ENCODE measurements at regions of chr3 and their contacts with region 1.

Region 1: DNA sequence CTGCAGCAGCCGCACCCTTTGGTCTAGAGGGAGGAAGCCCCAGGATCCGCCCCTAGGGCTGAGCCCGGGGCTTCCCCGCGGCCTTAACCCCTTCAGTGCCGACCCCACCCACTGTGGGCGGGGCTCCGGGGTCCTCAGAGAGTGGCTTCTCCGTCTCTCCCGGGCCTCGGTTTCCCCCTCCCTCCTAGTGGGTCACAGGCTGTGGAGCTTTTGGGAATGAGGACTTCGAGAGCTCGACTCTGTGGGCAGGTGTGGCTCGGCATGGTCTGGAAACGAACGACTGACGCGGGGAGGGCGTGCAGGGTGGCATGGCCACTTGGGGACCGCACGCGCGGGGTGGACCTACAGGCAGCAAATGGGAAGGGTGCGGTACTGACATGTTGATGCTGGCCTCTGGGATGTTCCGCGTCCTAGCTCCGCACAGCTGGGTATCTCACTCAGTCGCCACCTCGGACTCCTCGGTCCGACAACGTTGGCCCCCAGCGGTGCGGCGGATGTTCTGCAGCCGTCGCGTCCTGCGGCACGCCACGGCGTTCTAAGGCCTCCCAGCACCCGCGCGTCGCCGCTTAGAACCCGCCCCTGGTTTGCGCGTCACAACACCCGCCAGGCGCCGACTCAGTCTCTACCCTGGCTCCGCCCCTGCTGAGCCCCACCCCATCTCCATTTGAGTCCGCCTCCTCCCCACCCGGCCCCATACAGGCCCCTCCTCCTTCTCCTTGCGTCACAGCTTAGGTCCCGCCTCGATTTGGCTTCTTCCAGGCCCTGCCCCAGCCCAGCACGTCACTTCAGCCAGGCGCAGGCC is at the starts of genes HYAL3 and NAA80:
- DNase-seq: peak; percentile 100
- H3K4me3 ChIP-seq: peak within 1 kb of the TSS; percentile 74 to 85
- H3K4me3 Mint-ChIP-seq: peak within 1 kb of the TSS; percentile 95 to 100 (median 97)
- H3K27ac ChIP-seq: peak within 1 kb of the TSS; percentile 90
- H3K27ac Mint-ChIP-seq: peak within 1 kb of the TSS; percentile 95 to 100 (median 100)
- H3K4me1 ChIP-seq: peaks cover 25% of the 10 kb centered on the region
- H3K4me1 Mint-ChIP-seq: peaks cover 12 to 47% (median 26%) of the 10 kb centered on the region in 4 donors
- H3K27me3 ChIP-seq: no peaks in the 10 kb centered on the region
- H3K27me3 Mint-ChIP-seq: no peaks in the 10 kb centered on the region
- total RNA-seq, gene HYAL3: 5.1 to 5.4 TPM
- total RNA-seq, gene NAA80: 33.1 to 33.7 TPM

Region 2: GRCh38 chr3:50235716-50236496 is 63.1 kb before region 1 on chr3 and contains the start of gene GNAI2:
- CTCF ChIA-PET with region 1: interaction called, 5 read pairs
- POLR2A ChIA-PET with region 1: interaction called, 19 read pairs
- intact Hi-C with region 1: loop called (anchors 1 kb)
- DNase-seq: peak; percentile 99
- H3K4me3 ChIP-seq: peak within 1 kb of the TSS; percentile 75 to 94
- H3K4me3 Mint-ChIP-seq: peak within 1 kb of the TSS; percentile 96 to 99 (median 98)
- H3K27ac ChIP-seq: peak within 1 kb of the TSS; percentile 76
- H3K27ac Mint-ChIP-seq: peak within 1 kb of the TSS; percentile 91 to 97 (median 94)
- H3K4me1 ChIP-seq: peaks cover 40% of the 10 kb centered on the region
- H3K4me1 Mint-ChIP-seq: peaks cover 20 to 58% (median 35%) of the 10 kb centered on the region in 4 donors
- H3K27me3 ChIP-seq: no peaks in the 10 kb centered on the region
- H3K27me3 Mint-ChIP-seq: no peaks in the 10 kb centered on the region
- total RNA-seq, gene GNAI2: 292 to 300 TPM

Region 3: GRCh38 chr3:50327943-50328691 is 29.1 kb after region 1 on chr3 and contains the start of gene TUSC2:
- CTCF ChIA-PET with region 1: interaction called, 37 read pairs
- POLR2A ChIA-PET with region 1: interaction called, 178 read pairs
- intact Hi-C with region 1: loop called (anchors 2 kb)
- DNase-seq: peak; percentile 91 to 96 (median 93)
- H3K4me3 ChIP-seq: peak within 1 kb of the TSS; percentile 73 to 91
- H3K4me3 Mint-ChIP-seq: peak within 1 kb of the TSS; percentile 91 to 97 (median 94)
- H3K27ac ChIP-seq: peak within 1 kb of the TSS; percentile 82
- H3K27ac Mint-ChIP-seq: peak within 1 kb of the TSS; percentile 93 to 97 (median 97)
- H3K4me1 ChIP-seq: peaks cover 22% of the 10 kb centered on the region
- H3K4me1 Mint-ChIP-seq: peaks cover 13 to 42% (median 23%) of the 10 kb centered on the region in 4 donors
- H3K27me3 ChIP-seq: no peaks in the 10 kb centered on the region
- H3K27me3 Mint-ChIP-seq: no peaks in the 10 kb centered on the region
- total RNA-seq, gene TUSC2: 25.3 to 30.0 TPM

Region 4: DNA sequence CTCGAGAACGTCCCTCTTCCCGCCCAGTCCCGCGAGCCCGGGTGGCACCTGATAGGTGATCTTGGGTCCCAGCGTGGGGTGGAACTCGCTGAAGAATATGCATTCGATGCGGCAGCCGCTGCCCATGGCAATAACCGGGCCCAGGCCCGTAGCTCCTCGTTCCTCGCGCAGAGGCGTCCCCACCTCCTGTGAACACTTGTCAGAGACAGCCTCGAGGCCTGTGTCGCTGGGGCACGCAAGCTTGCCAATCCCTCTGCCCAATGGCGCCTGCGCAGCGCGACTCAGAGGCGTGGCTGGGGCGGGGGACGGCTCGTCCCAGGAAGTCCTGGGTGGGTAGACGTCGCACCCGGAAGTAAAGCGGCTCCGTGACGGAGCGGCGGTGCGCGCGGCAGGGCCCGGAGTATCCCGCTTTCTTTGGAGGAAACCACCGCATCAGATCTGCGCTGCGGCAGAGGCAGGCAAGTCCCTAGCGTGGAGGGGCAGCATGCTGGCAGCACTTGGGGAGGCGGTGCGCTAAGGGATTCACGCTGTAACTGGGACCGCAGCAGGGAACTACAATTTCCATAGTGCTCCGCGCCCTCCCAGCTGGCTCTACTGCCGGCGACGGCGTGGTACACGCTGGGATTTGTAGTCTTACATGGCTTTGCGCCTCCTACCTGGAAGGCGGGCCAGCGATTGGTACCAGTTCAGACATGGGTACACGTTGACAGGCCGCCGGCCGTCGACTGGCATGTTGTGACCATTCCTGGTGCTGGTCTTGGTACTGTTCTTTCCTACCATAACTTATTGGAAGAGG is 51.7 kb after region 1 on chr3 and contains the starts of genes CYB561D2 and NPRL2:
- CTCF ChIA-PET with region 1: interaction called, 9 read pairs
- POLR2A ChIA-PET with region 1: interaction called, 31 read pairs
- intact Hi-C with region 1: loop called (anchors 1 kb)
- DNase-seq: peak; percentile 99 to 100 (median 99)
- H3K4me3 ChIP-seq: peak within 1 kb of the TSS; percentile 66 to 98
- H3K4me3 Mint-ChIP-seq: peak within 1 kb of the TSS; percentile 91 to 99 (median 96)
- H3K27ac ChIP-seq: peak within 1 kb of the TSS; percentile 94
- H3K27ac Mint-ChIP-seq: peak within 1 kb of the TSS; percentile 96 to 99 (median 99)
- H3K4me1 ChIP-seq: peaks cover 58% of the 10 kb centered on the region
- H3K4me1 Mint-ChIP-seq: peaks cover 28 to 78% (median 53%) of the 10 kb centered on the region in 4 donors
- H3K27me3 ChIP-seq: no peaks in the 10 kb centered on the region
- H3K27me3 Mint-ChIP-seq: no peaks in the 10 kb centered on the region
- total RNA-seq, gene CYB561D2: 39.6 to 40.0 TPM
- total RNA-seq, gene NPRL2: 50.0 to 53.0 TPM

Region 5: GRCh38 chr3:50365080-50365841 is 66.2 kb after region 1 on chr3:
- CTCF ChIA-PET with region 1: no interaction called
- POLR2A ChIA-PET with region 1: interaction called, 10 read pairs
- intact Hi-C with region 1: no loop called
- DNase-seq: peak; percentile 92 to 97 (median 95)
- H3K4me3 ChIP-seq: peak overlapping the region; percentile 73 to 100
- H3K4me3 Mint-ChIP-seq: peak overlapping the region; percentile 86 to 94 (median 90)
- H3K27ac ChIP-seq: peak overlapping the region; percentile 87
- H3K27ac Mint-ChIP-seq: peak overlapping the region; percentile 91 to 97 (median 95)
- H3K4me1 ChIP-seq: peaks cover 30% of the 10 kb centered on the region
- H3K4me1 Mint-ChIP-seq: peaks cover 4 to 35% (median 18%) of the 10 kb centered on the region in 4 donors
- H3K27me3 ChIP-seq: no peaks in the 10 kb centered on the region
- H3K27me3 Mint-ChIP-seq: peaks cover 0 to 1% of the 10 kb centered on the region in 2 donors

Measured in CD4-positive, alpha-beta memory T cell (primary cell).